Caco-2 (cell line): ENCODE measurements at regions of chr13 and their contacts with region 1.

Region 1: DNA sequence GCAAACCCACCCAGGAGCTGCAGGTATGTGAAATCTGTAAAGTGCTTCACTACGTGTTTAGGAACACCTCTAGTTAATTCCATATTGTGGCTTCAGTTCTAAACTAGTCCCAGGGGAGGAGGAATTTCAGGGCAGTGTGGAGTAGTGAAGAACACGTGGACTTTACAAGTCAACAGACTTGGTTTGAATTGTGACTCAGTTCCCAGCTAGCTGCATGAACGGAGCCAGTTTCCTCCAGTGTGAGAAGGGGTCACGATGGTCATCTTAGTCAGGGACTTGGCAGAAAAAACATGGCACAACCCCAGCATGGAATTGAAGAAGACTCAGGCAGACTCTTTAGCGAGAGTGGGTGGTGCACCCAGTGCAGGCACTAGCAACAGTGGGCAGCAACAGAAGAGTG is 175.7 kb upstream of the UBL3 start:
- DNase-seq: no peak
- H3K4me3 ChIP-seq: no peak overlapping the region
- H3K4me3 Mint-ChIP-seq: no peak overlapping the region
- H3K27ac Mint-ChIP-seq: peak overlapping the region; percentile 73
- H3K4me1 ChIP-seq: peaks cover 59% of the 10 kb centered on the region
- H3K4me1 Mint-ChIP-seq: peaks cover 35% of the 10 kb centered on the region
- H3K27me3 ChIP-seq: no peaks in the 10 kb centered on the region
- H3K27me3 Mint-ChIP-seq: no peaks in the 10 kb centered on the region
- CTCF ChIP-seq: no peak

Region 2: DNA sequence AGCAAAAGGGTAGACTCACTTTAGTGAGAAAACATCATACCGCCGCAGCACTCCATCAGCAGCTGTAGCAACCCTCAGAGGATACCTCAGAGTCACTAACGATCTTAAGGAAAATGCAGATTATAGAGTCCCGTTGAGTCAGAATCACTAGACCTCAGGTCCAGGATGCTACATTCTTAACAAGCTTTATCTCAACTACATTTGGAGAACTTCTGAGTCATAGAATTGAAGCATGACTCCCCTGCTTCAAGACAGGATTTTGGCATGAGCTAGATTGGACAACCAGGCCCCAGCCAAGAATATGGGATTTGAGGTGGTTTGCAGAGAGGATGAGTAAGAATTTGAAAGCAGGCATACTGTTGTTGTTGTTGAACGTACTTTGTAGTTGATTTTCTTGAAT is 56.8 kb before region 1 on chr13:
- CTCF ChIA-PET with region 1: no interaction called
- POLR2A ChIA-PET with region 1: no interaction called
- intact Hi-C with region 1: no loop called
- DNase-seq: no peak
- H3K4me3 ChIP-seq: no peak overlapping the region
- H3K4me3 Mint-ChIP-seq: no peak overlapping the region
- H3K27ac Mint-ChIP-seq: no peak overlapping the region
- H3K4me1 ChIP-seq: no peaks in the 10 kb centered on the region
- H3K4me1 Mint-ChIP-seq: no peaks in the 10 kb centered on the region
- H3K27me3 ChIP-seq: no peaks in the 10 kb centered on the region
- H3K27me3 Mint-ChIP-seq: peaks cover 6% of the 10 kb centered on the region
- CTCF ChIP-seq: no peak

Region 3: GRCh38 chr13:29991343-29991742 is 34.8 kb before region 1 on chr13:
- CTCF ChIA-PET with region 1: no interaction called
- POLR2A ChIA-PET with region 1: no interaction called
- intact Hi-C with region 1: loop called (anchors 1 kb)
- DNase-seq: no peak
- H3K4me3 ChIP-seq: no peak overlapping the region
- H3K4me3 Mint-ChIP-seq: no peak overlapping the region
- H3K27ac Mint-ChIP-seq: no peak overlapping the region
- H3K4me1 ChIP-seq: no peaks in the 10 kb centered on the region
- H3K4me1 Mint-ChIP-seq: no peaks in the 10 kb centered on the region
- H3K27me3 ChIP-seq: no peaks in the 10 kb centered on the region
- H3K27me3 Mint-ChIP-seq: no peaks in the 10 kb centered on the region
- CTCF ChIP-seq: no peak

Region 4: GRCh38 chr13:30004204-30004603 is 21.9 kb before region 1 on chr13:
- CTCF ChIA-PET with region 1: no interaction called
- POLR2A ChIA-PET with region 1: no interaction called
- intact Hi-C with region 1: no loop called
- DNase-seq: no peak
- H3K4me3 ChIP-seq: no peak overlapping the region
- H3K4me3 Mint-ChIP-seq: no peak overlapping the region
- H3K27ac Mint-ChIP-seq: no peak overlapping the region
- H3K4me1 ChIP-seq: no peaks in the 10 kb centered on the region; the same call in 1 of the 2 replicates
- H3K4me1 Mint-ChIP-seq: peaks cover 19% of the 10 kb centered on the region
- H3K27me3 ChIP-seq: no peaks in the 10 kb centered on the region
- H3K27me3 Mint-ChIP-seq: no peaks in the 10 kb centered on the region
- CTCF ChIP-seq: no peak

Region 5: DNA sequence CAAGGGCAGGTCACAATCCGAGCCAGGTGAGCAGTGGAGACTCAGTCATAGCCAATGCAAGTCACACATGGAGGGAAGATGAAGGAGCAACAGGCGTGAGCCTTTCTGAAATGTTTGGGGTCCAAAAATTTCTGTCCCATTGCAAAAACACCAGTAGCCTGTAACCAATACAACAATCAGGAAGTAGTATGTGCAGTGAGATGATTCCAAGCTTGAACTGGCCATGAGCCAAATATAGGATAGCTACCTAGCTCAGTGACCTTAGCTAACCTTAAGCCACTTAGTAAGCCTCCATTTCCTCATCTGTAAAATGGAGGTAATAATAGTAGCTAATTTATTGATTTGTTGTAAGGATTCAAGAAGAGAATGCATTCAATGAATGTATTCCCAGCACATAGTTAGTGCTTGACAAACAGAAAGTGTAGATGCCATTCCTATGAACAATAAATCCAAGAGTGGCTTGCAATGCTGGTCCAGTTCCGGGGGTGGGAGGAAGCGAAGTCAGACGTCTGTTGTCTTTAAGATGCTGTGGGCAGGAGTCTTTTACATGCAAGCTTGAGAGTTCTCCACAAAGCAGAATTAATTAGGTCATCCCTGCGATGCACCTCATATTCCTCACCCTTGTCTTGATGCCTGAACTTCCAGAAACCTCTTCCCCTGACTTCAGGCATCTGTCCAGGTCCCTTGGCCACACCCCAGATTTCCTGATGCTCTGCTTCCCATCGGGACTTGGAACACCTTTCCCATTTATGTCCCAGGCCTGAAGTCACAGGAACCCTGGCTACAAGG is 20.0 kb after region 1 on chr13:
- CTCF ChIA-PET with region 1: interaction called, 3 read pairs
- POLR2A ChIA-PET with region 1: no interaction called
- intact Hi-C with region 1: loop called (anchors 2 kb)
- DNase-seq: no peak
- H3K4me3 ChIP-seq: no peak overlapping the region
- H3K4me3 Mint-ChIP-seq: no peak overlapping the region
- H3K27ac Mint-ChIP-seq: peak overlapping the region; percentile 54
- H3K4me1 ChIP-seq: peaks cover 19% of the 10 kb centered on the region
- H3K4me1 Mint-ChIP-seq: peaks cover 13% of the 10 kb centered on the region
- H3K27me3 ChIP-seq: no peaks in the 10 kb centered on the region
- H3K27me3 Mint-ChIP-seq: no peaks in the 10 kb centered on the region
- CTCF ChIP-seq: no peak

Region 6: DNA sequence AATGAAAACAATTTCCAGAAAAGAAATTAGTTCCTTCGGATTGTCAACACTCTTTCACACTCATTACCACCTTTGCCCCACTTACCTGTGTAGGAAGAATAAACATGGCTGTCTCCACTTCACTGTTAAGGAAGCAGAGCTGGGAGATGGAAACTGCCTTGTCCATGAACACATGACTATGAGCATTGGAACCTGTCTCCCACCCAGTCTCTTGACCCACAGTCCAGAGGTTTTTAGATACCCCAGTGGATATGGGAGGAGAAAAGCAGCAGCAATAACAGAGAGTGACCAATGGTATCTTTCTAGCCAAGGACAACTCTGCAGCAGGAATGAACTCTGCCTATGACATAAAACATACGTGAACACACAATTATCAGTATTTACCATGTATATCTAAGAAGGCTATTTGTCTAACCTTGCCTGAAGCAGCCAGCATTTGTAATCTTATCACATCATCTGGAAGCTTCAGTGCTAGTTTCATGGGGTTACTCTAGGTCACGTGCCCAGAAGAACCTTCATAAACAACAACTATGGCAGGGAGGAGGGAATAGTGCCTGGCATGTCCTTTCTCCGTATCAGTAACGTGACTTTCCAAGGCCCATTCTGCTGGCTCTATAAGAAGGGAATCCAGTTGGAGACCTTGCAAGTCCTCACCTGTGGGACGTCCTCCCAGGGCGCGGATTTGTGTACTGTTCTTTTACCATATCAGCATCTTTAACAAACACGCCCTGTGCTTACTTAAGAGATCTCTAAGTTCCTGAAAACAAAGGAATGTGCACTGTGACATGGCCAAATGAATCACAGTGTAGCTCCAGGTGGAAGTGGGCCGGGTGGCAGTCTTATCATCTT is 46.1 kb after region 1 on chr13:
- CTCF ChIA-PET with region 1: no interaction called
- POLR2A ChIA-PET with region 1: no interaction called
- intact Hi-C with region 1: loop called (anchors 1 kb)
- DNase-seq: peak; percentile 86 to 93
- H3K4me3 ChIP-seq: no peak overlapping the region
- H3K4me3 Mint-ChIP-seq: peak overlapping the region; percentile 61
- H3K27ac Mint-ChIP-seq: peak overlapping the region; percentile 91
- H3K4me1 ChIP-seq: peaks cover 23% of the 10 kb centered on the region
- H3K4me1 Mint-ChIP-seq: peaks cover 23% of the 10 kb centered on the region
- H3K27me3 ChIP-seq: no peaks in the 10 kb centered on the region
- H3K27me3 Mint-ChIP-seq: no peaks in the 10 kb centered on the region
- CTCF ChIP-seq: no peak

Region 7: GRCh38 chr13:30529085-30529834 is 503.2 kb after region 1 on chr13:
- CTCF ChIA-PET with region 1: no interaction called
- POLR2A ChIA-PET with region 1: no interaction called
- intact Hi-C with region 1: no loop called
- DNase-seq: no peak
- H3K4me3 ChIP-seq: no peak overlapping the region
- H3K4me3 Mint-ChIP-seq: no peak overlapping the region
- H3K27ac Mint-ChIP-seq: no peak overlapping the region
- H3K4me1 ChIP-seq: peaks cover 7% of the 10 kb centered on the region
- H3K4me1 Mint-ChIP-seq: peaks cover 7% of the 10 kb centered on the region
- H3K27me3 ChIP-seq: no peaks in the 10 kb centered on the region; the same call in 1 of the 2 replicates
- H3K27me3 Mint-ChIP-seq: no peaks in the 10 kb centered on the region
- CTCF ChIP-seq: no peak